CD4-positive, alpha-beta T cell (primary cell): ENCODE measurements at regions of chr10 and their contacts with region 1.

Region 1: GRCh38 chr10:106941297-106942034 is 223.0 kb downstream of the SORCS1 start:
- DNase-seq: no peak
- ATAC-seq: no peak
- H3K4me3 ChIP-seq: no peak overlapping the region
- H3K4me3 Mint-ChIP-seq: no peak overlapping the region
- H3K27ac ChIP-seq: no peak overlapping the region
- H3K27ac Mint-ChIP-seq: no peak overlapping the region
- H3K4me1 ChIP-seq: no peaks in the 10 kb centered on the region
- H3K4me1 Mint-ChIP-seq: no peaks in the 10 kb centered on the region
- H3K27me3 ChIP-seq: no peaks in the 10 kb centered on the region
- H3K27me3 Mint-ChIP-seq: no peaks in the 10 kb centered on the region
- CTCF ChIP-seq: no peak

Region 2: DNA sequence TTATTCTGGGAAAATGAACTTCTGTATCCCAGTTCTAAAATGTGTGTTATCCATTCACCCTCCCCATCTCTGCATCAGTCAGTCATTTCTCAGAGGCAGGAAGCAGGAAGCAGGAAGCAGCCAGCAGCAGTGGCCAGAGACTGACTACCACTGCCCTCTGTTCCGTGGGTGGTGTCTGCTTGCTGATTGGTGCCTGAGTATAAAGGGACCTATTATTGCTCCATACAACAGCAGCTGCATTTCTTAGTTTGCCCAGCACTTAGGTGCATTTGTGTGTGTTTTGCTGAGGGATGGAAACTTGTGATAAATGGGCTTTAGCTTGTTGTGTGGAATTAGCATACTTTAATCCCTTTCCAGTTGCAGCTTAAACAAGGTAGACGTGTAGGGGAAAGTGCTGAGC is 359.2 kb before region 1 on chr10:
- CTCF ChIA-PET with region 1: no interaction called
- POLR2A ChIA-PET with region 1: no interaction called
- intact Hi-C with region 1: no loop called
- DNase-seq: no peak
- ATAC-seq: no peak
- H3K4me3 ChIP-seq: no peak overlapping the region
- H3K4me3 Mint-ChIP-seq: no peak overlapping the region
- H3K27ac ChIP-seq: no peak overlapping the region
- H3K27ac Mint-ChIP-seq: no peak overlapping the region
- H3K4me1 ChIP-seq: no peaks in the 10 kb centered on the region
- H3K4me1 Mint-ChIP-seq: no peaks in the 10 kb centered on the region
- H3K27me3 ChIP-seq: no peaks in the 10 kb centered on the region
- H3K27me3 Mint-ChIP-seq: no peaks in the 10 kb centered on the region
- CTCF ChIP-seq: no peak

Region 3: GRCh38 chr10:106957823-106958588 is 16.5 kb after region 1 on chr10:
- CTCF ChIA-PET with region 1: no interaction called
- POLR2A ChIA-PET with region 1: no interaction called
- intact Hi-C with region 1: loop called in 1 of 2 experiments (anchors 1 kb)
- DNase-seq: peak in 2 of 14 experiments; percentile 11 to 17
- ATAC-seq: no peak
- H3K4me3 ChIP-seq: no peak overlapping the region
- H3K4me3 Mint-ChIP-seq: no peak overlapping the region
- H3K27ac ChIP-seq: no peak overlapping the region
- H3K27ac Mint-ChIP-seq: no peak overlapping the region
- H3K4me1 ChIP-seq: no peaks in the 10 kb centered on the region
- H3K4me1 Mint-ChIP-seq: no peaks in the 10 kb centered on the region
- H3K27me3 ChIP-seq: no peaks in the 10 kb centered on the region
- H3K27me3 Mint-ChIP-seq: no peaks in the 10 kb centered on the region
- CTCF ChIP-seq: no peak